PC-9 (cell line): ENCODE measurements at regions of chr1 and their contacts with region 1.

Region 1: GRCh38 chr1:151839457-151840405 is at the start of gene C2CD4D:
- DNase-seq: peak; percentile 86 to 93
- H3K4me3 ChIP-seq: peak within 1 kb of the TSS; percentile 57
- H3K27ac ChIP-seq: peak within 1 kb of the TSS; percentile 86
- H3K4me1 ChIP-seq: peaks cover 35% of the 10 kb centered on the region
- H3K27me3 ChIP-seq: no peaks in the 10 kb centered on the region
- CTCF ChIP-seq: no peak
- total RNA-seq, gene C2CD4D: 1.4 and 1.5 TPM in 2 replicates

Region 2: GRCh38 chr1:151198255-151199127 is 641.2 kb before region 1 on chr1 and contains the start of gene PIP5K1A:
- CTCF ChIA-PET with region 1: no interaction called
- POLR2A ChIA-PET with region 1: no interaction called
- intact Hi-C with region 1: loop called (anchors 2 kb)
- DNase-seq: peak; percentile 88 to 95
- H3K4me3 ChIP-seq: peak within 1 kb of the TSS; percentile 85
- H3K27ac ChIP-seq: peak within 1 kb of the TSS; percentile 93
- H3K4me1 ChIP-seq: peaks cover 38% of the 10 kb centered on the region
- H3K27me3 ChIP-seq: no peaks in the 10 kb centered on the region
- CTCF ChIP-seq: no peak
- total RNA-seq, gene PIP5K1A: 69.7 and 76.4 TPM in 2 replicates

Region 3: DNA sequence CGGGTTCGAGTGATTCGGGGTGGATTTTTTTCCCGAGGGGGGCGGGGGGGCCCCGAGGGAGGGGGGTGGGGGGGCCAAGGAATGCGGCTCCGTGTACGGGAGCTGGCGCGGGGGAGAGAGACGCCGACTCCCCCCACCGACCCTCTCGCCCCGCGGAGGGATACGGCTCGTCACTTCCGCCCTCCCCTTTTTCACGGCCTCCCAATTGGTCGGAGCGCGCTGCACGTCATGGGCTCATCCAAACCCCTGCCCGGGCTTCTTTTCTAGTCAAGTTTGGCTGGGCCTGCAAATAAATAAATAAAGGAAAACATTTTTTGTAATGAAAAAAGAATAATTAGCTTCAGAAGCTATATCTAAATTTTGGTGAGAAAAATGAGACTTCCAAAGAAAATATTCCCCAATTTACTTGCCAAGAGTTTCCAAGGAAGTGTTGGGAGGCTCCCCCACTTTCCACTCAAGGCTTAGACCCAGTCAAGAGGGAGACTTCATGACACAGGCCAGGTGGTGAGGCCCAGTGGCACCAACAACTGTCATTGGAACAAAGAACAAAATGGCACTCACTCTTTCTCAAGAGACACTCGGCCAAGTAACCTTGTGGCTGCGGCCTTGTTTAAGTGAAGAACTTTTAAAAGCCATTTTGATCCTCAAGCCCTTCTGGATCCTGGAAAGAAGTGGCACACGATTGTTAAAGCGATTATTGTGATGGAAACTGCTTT is 380.2 kb before region 1 on chr1 and contains the start of gene POGZ:
- CTCF ChIA-PET with region 1: no interaction called
- POLR2A ChIA-PET with region 1: interaction called, 46 read pairs
- intact Hi-C with region 1: no loop called
- DNase-seq: peak; percentile 79 to 90
- H3K4me3 ChIP-seq: peak within 1 kb of the TSS; percentile 80
- H3K27ac ChIP-seq: peak within 1 kb of the TSS; percentile 72
- H3K4me1 ChIP-seq: peaks cover 17% of the 10 kb centered on the region
- H3K27me3 ChIP-seq: no peaks in the 10 kb centered on the region
- CTCF ChIP-seq: no peak
- total RNA-seq, gene POGZ: 63.3 and 71.0 TPM in 2 replicates

Region 4: DNA sequence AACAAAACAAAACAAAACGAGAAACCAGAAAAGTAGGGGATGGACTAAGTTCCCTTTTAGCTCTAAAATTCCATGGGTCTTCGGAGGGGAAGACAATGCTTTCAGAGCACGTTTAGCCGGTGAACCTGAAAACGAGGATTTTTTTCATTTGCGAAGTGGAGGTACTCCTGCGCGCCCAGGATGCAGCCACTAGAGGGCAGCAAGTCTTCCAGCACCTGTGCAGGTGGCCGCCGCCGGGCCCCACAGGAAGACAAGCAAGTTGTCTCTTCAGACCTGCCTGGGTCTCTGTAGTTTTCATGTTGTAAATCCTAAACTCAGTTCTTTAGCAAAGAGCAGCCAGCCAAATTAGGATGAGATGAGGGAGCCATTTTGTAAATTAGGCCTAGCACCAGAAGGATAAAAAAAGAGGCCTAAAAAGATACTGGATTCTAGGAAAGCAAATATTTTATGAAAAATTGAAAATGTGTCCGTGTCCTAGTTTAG is 245.5 kb before region 1 on chr1:
- CTCF ChIA-PET with region 1: interaction called, 3 read pairs
- POLR2A ChIA-PET with region 1: no interaction called
- intact Hi-C with region 1: loop called (anchors 1 kb)
- DNase-seq: peak; percentile 54 to 82
- H3K4me3 ChIP-seq: no peak overlapping the region
- H3K27ac ChIP-seq: no peak overlapping the region
- H3K4me1 ChIP-seq: peaks cover 30% of the 10 kb centered on the region
- H3K27me3 ChIP-seq: no peaks in the 10 kb centered on the region
- CTCF ChIP-seq: peak; percentile 94

Region 5: GRCh38 chr1:151762941-151763921 is 76.5 kb before region 1 on chr1 and contains the start of gene MRPL9:
- CTCF ChIA-PET with region 1: interaction called, 5 read pairs
- POLR2A ChIA-PET with region 1: interaction called, 3 read pairs
- intact Hi-C with region 1: loop called (anchors 5 kb)
- DNase-seq: peak; percentile 56 to 72
- H3K4me3 ChIP-seq: peak within 1 kb of the TSS; percentile 83
- H3K27ac ChIP-seq: peak within 1 kb of the TSS; percentile 66
- H3K4me1 ChIP-seq: peaks cover 29% of the 10 kb centered on the region
- H3K27me3 ChIP-seq: no peaks in the 10 kb centered on the region
- CTCF ChIP-seq: no peak
- total RNA-seq, gene MRPL9: 80.9 and 132 TPM in 2 replicates

Region 6: DNA sequence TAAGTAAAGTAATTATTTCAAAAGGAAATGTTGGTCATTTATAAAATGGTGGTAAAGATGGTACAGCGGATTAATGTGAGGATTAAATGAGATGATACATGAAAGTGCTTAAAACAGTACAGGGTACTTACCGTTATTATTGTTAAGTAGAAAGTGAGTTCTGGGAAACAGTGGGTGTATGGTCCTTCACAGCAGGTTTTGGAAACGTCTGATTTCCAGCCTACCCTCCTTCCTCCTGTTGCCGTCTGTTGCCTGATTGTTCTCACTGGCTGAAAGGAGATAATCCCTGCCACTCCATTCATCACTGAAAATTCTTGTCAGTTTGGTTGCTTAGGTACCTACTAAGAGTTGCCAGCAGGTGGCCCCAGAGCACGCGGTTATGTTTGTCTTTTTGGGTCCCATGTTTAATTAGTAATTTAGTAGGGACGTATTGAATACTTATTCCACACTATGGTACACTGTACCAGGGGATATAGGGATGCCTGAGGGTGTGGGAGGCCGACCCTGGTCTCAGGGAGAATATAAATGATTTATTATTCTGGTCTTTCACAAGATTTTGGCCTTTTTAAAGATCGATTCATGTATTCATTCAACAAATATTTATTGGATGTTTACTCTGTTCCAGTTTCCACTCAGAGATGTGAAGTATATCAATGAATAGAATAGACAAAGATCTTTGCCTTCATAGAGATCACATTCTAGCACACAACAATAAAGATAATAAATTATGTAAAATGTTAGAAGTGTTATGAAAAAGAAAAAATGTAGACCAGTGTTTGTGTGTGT is 350.1 kb after region 1 on chr1:
- CTCF ChIA-PET with region 1: no interaction called
- POLR2A ChIA-PET with region 1: no interaction called
- intact Hi-C with region 1: loop called (anchors 5 kb)
- DNase-seq: peak in 1 of 2 experiments; percentile 53
- H3K4me3 ChIP-seq: no peak overlapping the region
- H3K27ac ChIP-seq: peak overlapping the region; percentile 40; the same call in 1 of the 2 replicates
- H3K4me1 ChIP-seq: peaks cover 27% of the 10 kb centered on the region
- H3K27me3 ChIP-seq: peaks cover 22% of the 10 kb centered on the region; the same call in 1 of the 2 replicates
- CTCF ChIP-seq: peak; percentile 86